ENCODE measurements at regions of chr21 and their contacts with region 1.

Region 1: GRCh38 chr21:44299458-44300261 is at the start of gene PFKL:
- DNase-seq: peak; percentile 77 to 88
- ATAC-seq: peak; percentile 76
- H3K4me3 ChIP-seq: peak within 1 kb of the TSS; percentile 49 to 91
- H3K27ac ChIP-seq: peak within 1 kb of the TSS; percentile 4 to 47
- H3K4me1 ChIP-seq: no peaks in the 10 kb centered on the region
- H3K27me3 ChIP-seq: no peaks in the 10 kb centered on the region
- total RNA-seq, gene PFKL: 95.1 to 115 TPM

Region 2: DNA sequence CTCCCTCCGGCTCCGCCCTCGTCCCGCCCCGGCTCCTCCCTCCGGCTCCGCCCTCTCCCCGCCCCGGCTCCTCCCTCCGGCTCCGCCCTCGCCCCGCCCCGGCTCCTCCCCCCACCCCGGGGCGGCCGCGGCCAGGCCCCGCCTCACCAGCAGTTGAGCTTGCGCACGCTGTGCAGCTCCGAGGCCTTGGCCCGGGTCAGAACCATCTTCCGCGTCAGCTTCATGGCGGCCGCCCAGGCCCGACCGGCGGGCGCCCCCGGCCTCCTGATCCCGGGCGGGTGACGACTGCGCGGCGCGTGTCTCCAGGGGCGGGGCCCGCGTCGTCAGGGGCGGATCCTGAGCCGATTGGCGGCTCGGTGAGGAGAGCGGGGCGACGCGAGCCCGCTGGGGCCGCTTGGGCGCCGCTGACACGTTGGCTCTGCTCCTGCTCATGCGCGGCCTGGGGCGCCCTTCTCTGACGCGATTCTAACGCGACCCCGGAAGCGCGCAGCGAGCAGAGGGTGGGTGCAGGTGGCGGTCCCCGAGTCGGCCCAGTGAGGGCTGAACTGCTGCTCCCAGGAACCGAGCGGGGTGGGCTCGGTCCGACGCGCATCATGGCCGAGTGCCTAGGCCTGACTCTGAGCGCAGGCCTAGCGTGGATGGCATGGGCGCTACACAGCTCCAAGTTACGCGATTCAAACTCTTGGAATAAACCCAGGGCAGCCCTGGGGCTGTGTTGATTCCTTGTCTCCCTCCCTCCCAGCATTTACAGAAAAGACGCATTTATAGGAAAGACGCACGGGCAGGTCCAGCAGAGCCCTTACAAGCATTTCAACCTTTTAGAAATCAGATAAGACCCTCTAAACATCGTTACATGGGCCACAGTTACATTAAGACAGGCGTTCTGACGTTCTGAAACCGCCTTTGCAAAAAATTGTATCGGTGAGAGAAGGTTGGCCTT is 39.6 kb after region 1 on chr21 and contains the start of gene CFAP410:
- intact Hi-C with region 1: loop called (anchors 2 to 5 kb)
- DNase-seq: peak; percentile 96 to 98
- ATAC-seq: peak; percentile 98
- H3K4me3 ChIP-seq: peak within 1 kb of the TSS; percentile 69 to 87
- H3K27ac ChIP-seq: peak within 1 kb of the TSS; percentile 53 to 99
- H3K4me1 ChIP-seq: peaks cover 0 to 4% of the 10 kb centered on the region in 2 donors
- H3K27me3 ChIP-seq: no peaks in the 10 kb centered on the region
- total RNA-seq, gene CFAP410: 19.4 to 20.9 TPM

Region 3: GRCh38 chr21:44353191-44353970 is 53.7 kb after region 1 on chr21 and contains the start of gene TRPM2:
- intact Hi-C with region 1: no loop called
- DNase-seq: peak; percentile 79 to 82
- ATAC-seq: peak; percentile 58
- H3K4me3 ChIP-seq: no peak within 1 kb of the TSS
- H3K27ac ChIP-seq: no peak within 1 kb of the TSS
- H3K4me1 ChIP-seq: no peaks in the 10 kb centered on the region
- H3K27me3 ChIP-seq: no peaks in the 10 kb centered on the region
- total RNA-seq, gene TRPM2: 7.0 to 15.8 TPM

Region 4: GRCh38 chr21:44792702-44793591 is 493.3 kb after region 1 on chr21:
- intact Hi-C with region 1: loop called in 1 of 2 experiments (anchors 10 kb)
- DNase-seq: no peak
- ATAC-seq: peak; percentile 85
- H3K4me3 ChIP-seq: no peak overlapping the region
- H3K27ac ChIP-seq: no peak overlapping the region
- H3K4me1 ChIP-seq: no peaks in the 10 kb centered on the region
- H3K27me3 ChIP-seq: no peaks in the 10 kb centered on the region

Region 5: GRCh38 chr21:45074048-45074817 is 774.6 kb after region 1 on chr21 and contains the start of gene ADARB1:
- intact Hi-C with region 1: no loop called
- DNase-seq: peak; percentile 76 to 88
- ATAC-seq: peak; percentile 76
- H3K4me3 ChIP-seq: peak within 1 kb of the TSS; percentile 59 to 88
- H3K27ac ChIP-seq: peak within 1 kb of the TSS; percentile 78 to 95
- H3K4me1 ChIP-seq: peaks cover 0 to 1% of the 10 kb centered on the region in 2 donors
- H3K27me3 ChIP-seq: no peaks in the 10 kb centered on the region
- total RNA-seq, gene ADARB1: 87.9 to 224 TPM

Measured in aorta (tissue), 5 donors.